Dorsolateral prefrontal cortex (tissue), 120 donors: ENCODE measurements at regions of chr5 and their contacts with region 1.

Region 1: GRCh38 chr5:141564216-141564692 is 54.5 kb downstream of the DIAPH1 start:
- DNase-seq: peak in 4 of 10 donors; percentile 38 to 80 (median 50)
- H3K4me3 ChIP-seq: peak overlapping the region in 20 of 59 donors; percentile 2 to 30 (median 17)
- H3K27ac ChIP-seq: peak overlapping the region in 55 of 59 donors; percentile 3 to 88 (median 69)
- H3K27me3 ChIP-seq: no peaks in the 10 kb centered on the region
- CTCF ChIP-seq: peak; percentile 97 to 100 (median 100)

Region 2: GRCh38 chr5:141084487-141084990 is 479.7 kb before region 1 on chr5:
- intact Hi-C with region 1: loop called in 1 of 2 experiments (anchors 5 kb)
- DNase-seq: peak in 6 of 10 donors; percentile 9 to 67 (median 48)
- H3K4me3 ChIP-seq: peak overlapping the region; percentile 11 to 77 (median 58)
- H3K27ac ChIP-seq: peak overlapping the region in 34 of 59 donors; percentile 15 to 82 (median 64)
- H3K27me3 ChIP-seq: peaks cover 0 to 54% (median 6%) of the 10 kb centered on the region in 45 donors
- CTCF ChIP-seq: peak in 55 of 56 donors; percentile 34 to 87 (median 70)

Region 3: DNA sequence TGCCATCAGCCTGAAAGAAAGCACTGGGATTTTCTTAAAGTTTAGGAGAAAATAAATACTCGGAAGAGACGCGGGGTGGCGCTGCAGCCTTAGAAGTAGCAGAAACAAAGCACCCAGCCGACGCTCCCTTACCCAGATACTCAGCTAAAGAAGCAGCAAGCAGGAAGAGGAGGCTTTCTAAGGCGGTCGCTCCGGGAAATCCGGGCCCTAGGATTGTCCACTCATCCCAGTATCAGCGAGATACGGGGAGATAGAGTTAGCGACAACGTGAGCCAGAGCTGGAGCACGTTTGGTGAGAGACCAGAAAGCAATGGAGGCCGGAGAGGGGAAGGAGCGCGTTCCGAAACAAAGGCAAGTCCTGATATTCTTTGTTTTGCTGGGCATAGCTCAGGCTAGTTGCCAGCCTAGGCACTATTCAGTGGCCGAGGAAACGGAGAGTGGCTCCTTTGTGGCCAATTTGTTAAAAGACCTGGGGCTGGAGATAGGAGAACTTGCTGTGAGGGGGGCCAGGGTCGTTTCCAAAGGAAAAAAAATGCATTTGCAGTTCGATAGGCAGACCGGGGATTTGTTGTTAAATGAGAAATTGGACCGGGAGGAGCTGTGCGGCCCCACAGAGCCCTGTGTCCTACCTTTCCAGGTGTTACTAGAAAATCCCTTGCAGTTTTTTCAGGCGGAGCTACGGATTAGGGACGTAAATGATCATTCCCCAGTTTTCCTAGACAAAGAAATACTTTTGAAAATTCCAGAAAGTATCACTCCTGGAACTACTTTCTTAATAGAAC is 469.6 kb before region 1 on chr5 and contains the start of gene PCDHB2:
- intact Hi-C with region 1: loop called in 1 of 2 experiments (anchors 5 kb)
- DNase-seq: peak in 4 of 10 donors; percentile 19 to 41 (median 32)
- H3K4me3 ChIP-seq: peak within 1 kb of the TSS in 57 of 59 donors; percentile 0 to 64 (median 41)
- H3K27ac ChIP-seq: peak within 1 kb of the TSS in 7 of 59 donors; percentile 28 to 67 (median 43)
- H3K27me3 ChIP-seq: peaks cover 0 to 35% (median 5%) of the 10 kb centered on the region in 45 donors
- CTCF ChIP-seq: peak in 55 of 56 donors; percentile 12 to 76 (median 49)
- total RNA-seq, gene PCDHB2: 3.4 to 15.2 (median 7.4) TPM

Region 4: GRCh38 chr5:141186897-141187512 is 377.2 kb before region 1 on chr5 and contains the start of gene PCDHB9:
- intact Hi-C with region 1: loop called in 1 of 2 experiments (anchors 10 kb)
- DNase-seq: no peak
- H3K4me3 ChIP-seq: peak within 1 kb of the TSS in 20 of 59 donors; percentile 10 to 53 (median 32)
- H3K27ac ChIP-seq: no peak within 1 kb of the TSS
- H3K27me3 ChIP-seq: peaks cover 0 to 10% (median 0%) of the 10 kb centered on the region in 45 donors
- CTCF ChIP-seq: peak in 55 of 56 donors; percentile 14 to 70 (median 44)
- total RNA-seq, gene PCDHB9: 4.3 to 18.3 (median 9.8) TPM

Region 5: DNA sequence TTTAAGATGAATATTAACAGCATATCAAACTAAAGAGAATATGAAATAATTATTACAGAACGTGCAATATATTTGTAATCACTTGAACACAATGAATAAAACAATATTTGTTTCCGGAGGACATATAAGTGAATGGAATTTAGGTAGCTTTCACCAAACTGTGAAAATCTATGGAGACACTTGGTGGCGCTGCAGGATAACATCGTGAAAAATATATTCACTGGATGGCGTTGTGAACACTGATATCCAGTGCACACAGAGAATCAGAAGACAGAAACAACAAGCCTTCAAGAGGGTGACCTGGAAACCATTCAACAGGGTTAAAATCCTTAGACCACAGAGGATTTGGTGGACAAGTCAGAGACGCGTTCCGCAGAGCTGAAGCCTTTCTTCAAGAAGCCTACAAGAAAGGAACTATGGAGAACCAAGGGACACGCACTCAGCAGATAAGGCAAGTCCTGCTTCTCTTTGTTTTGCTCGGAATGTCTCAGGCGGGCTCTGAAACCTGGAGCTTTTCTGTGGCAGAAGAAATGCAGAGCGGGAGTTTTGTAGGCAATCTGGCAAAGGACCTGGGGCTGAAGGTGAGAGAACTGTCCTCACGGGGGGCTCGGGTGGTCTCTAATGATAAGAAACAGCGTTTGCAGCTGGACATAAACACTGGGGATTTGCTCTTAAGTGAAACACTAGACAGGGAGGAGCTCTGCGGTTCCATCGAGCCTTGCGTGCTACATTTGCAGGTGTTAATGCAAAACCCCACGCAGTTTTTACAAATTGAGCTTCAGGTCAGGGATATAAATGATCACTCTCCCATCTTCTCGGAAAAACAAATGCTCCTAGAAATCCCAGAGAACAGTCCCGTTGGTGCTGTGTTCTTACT is 364.7 kb before region 1 on chr5 and contains the start of gene PCDHB11:
- intact Hi-C with region 1: loop called in 1 of 2 experiments (anchors 10 kb)
- DNase-seq: no peak
- H3K4me3 ChIP-seq: peak within 1 kb of the TSS in 20 of 59 donors; percentile 2 to 44 (median 18)
- H3K27ac ChIP-seq: no peak within 1 kb of the TSS
- H3K27me3 ChIP-seq: no peaks in the 10 kb centered on the region
- CTCF ChIP-seq: peak in 10 of 56 donors; percentile 5 to 36 (median 26)
- total RNA-seq, gene PCDHB11: 5.8 to 16.2 (median 9.4) TPM

Region 6: DNA sequence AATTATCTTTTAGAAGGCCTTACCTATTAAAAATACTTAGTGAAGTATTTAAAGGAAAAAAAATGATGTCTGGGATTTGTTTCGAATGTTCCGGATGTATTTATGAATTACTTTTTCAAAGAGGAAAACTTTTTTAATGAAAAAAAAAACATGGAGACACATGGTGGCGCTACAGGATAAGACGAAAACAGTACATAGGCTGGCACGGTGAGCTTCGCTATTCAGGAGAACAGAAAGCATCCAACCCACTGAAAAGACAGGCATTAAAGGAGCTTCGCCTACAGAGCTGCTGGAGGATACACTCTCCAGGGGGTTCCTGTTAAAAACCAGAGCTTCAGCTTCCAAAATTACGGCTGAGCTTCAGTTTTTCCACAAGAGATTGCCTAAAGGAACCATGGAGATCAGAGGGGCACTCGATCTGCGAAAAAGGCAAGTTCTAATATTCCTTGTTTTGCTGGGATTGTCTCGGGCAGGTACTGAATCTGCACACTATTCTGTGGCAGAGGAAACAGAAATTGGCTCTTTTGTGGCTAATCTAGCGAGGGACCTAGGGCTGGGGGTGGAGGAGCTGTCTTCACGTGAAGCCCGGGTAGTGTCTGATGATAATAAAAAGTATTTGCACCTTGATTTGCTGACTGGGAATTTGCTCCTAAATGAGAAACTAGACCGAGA is 341.0 kb before region 1 on chr5 and contains the start of gene PCDHB14:
- intact Hi-C with region 1: loop called in 1 of 2 experiments (anchors 10 kb)
- DNase-seq: no peak
- H3K4me3 ChIP-seq: peak within 1 kb of the TSS in 49 of 59 donors; percentile 3 to 61 (median 34)
- H3K27ac ChIP-seq: no peak within 1 kb of the TSS
- H3K27me3 ChIP-seq: peaks cover 0 to 5% (median 0%) of the 10 kb centered on the region in 45 donors
- CTCF ChIP-seq: peak in 40 of 56 donors; percentile 7 to 59 (median 28)
- total RNA-seq, gene PCDHB14: 8.7 to 23.1 (median 14.6) TPM